H1 (cell line): ENCODE measurements at regions of chr4 and their contacts with region 1.

Region 1: DNA sequence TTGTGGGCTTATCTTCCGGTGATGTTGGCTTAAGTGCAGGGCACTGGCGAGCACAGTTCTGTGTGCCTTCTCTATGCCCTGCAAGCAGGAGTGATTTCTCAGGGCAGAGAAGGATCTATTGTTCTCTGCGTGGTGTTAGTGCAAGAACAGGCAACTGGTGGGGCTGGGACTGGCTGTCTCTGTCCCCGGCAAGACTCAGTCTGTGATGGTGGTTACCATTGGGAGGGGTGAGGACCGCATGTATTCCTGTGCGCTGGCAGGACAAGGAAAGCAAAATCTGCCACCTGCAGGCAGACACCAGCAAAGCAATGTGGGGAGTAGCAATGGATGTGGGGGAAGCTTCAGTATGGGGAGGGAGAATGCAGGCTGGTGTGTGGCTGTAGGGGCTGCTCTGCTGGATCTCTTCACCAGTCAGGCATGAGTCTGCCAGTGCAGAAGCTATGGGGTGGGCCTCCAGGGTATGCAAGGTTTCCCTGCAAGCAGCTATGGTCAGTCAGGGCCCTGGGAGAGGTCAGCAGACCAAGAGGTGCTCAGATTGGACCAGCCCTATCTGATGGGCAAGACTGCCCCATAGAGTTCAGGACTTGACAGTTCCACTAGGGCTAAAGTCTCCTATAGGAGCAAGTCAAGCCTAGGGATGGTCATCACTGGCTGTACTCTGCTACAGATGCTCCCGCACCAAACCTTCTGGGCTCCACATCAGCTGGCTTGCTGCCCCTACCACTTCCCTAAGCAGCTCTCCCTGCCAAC is 16.8 kb downstream of the PF4 start:
- DNase-seq: peak in 1 of 2 experiments; percentile 79
- H3K4me3 ChIP-seq: no peak overlapping the region
- H3K27ac ChIP-seq: no peak overlapping the region
- H3K4me1 ChIP-seq: 0 out of 7 replicates have a peak, but pooled peaks cover 0 to 1% (median 0%) of the 10 kb centered on the region in 4 experiments
- H3K27me3 ChIP-seq: no peaks in the 10 kb centered on the region; a peak in 1 of 7 replicates
- CTCF ChIP-seq: peak; percentile 70 to 92 (median 92)
- EP300 ChIP-seq: no peak
- POLR2A ChIP-seq: no peak
- RAD21 ChIP-seq: peak; percentile 78 to 86

Region 2: GRCh38 chr4:73729534-73730165 is 235.4 kb before region 1 on chr4:
- CTCF ChIA-PET with region 1: interaction called, 20 read pairs
- POLR2A ChIA-PET with region 1: no interaction called
- DNase-seq: no peak
- H3K4me3 ChIP-seq: no peak overlapping the region
- H3K27ac ChIP-seq: no peak overlapping the region
- H3K4me1 ChIP-seq: peaks cover 0 to 2% (median 0%) of the 10 kb centered on the region in 4 experiments; a peak in 1 of 7 replicates
- H3K27me3 ChIP-seq: no peaks in the 10 kb centered on the region
- CTCF ChIP-seq: peak; percentile 62 to 86 (median 75)
- EP300 ChIP-seq: no peak
- POLR2A ChIP-seq: no peak
- RAD21 ChIP-seq: peak; percentile 65 to 80

Region 3: DNA sequence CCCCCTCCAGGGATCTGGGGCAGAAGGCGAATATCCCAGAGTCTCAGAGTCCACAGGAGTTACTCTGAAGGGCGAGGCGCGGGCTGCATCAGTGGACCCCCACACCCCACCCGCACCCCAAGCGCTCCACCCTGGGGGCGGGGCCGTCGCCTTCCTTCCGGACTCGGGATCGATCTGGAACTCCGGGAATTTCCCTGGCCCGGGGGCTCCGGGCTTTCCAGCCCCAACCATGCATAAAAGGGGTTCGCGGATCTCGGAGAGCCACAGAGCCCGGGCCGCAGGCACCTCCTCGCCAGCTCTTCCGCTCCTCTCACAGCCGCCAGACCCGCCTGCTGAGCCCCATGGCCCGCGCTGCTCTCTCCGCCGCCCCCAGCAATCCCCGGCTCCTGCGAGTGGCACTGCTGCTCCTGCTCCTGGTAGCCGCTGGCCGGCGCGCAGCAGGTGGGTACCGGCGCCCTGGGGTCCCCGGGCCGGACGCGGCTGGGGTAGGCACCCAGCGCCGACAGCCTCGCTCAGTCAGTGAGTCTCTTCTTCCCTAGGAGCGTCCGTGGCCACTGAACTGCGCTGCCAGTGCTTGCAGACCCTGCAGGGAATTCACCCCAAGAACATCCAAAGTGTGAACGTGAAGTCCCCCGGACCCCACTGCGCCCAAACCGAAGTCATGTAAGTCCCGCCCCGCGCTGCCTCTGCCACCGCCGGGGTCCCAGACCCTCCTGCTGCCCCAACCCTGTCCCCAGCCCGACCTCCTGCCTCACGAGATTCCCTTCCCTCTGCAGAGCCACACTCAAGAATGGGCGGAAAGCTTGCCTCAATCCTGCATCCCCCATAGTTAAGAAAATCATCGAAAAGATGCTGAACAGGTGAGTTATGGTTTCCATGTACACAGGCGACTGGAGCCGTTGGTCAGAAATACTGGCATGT is 95.6 kb before region 1 on chr4 and contains the start of gene CXCL1:
- CTCF ChIA-PET with region 1: interaction called, 11 read pairs
- POLR2A ChIA-PET with region 1: no interaction called
- DNase-seq: peak in 1 of 2 experiments; percentile 70
- H3K4me3 ChIP-seq: peak within 1 kb of the TSS; percentile 30 to 76 (median 57)
- H3K27ac ChIP-seq: no peak within 1 kb of the TSS
- H3K4me1 ChIP-seq: peaks cover 0 to 4% (median 2%) of the 10 kb centered on the region in 4 experiments; a peak in 3 of 7 replicates
- H3K27me3 ChIP-seq: peaks cover 0 to 22% (median 11%) of the 10 kb centered on the region in 4 experiments; a peak in 6 of 7 replicates
- CTCF ChIP-seq: no peak
- EP300 ChIP-seq: no peak
- POLR2A ChIP-seq: no peak
- RAD21 ChIP-seq: no peak
- total RNA-seq, gene CXCL1: 0.69 and 0.80 TPM in 2 replicates

Region 4: GRCh38 chr4:73978886-73979285 is 13.8 kb after region 1 on chr4:
- CTCF ChIA-PET with region 1: interaction called, 37 read pairs
- POLR2A ChIA-PET with region 1: no interaction called
- DNase-seq: no peak
- H3K4me3 ChIP-seq: no peak overlapping the region
- H3K27ac ChIP-seq: no peak overlapping the region
- H3K4me1 ChIP-seq: peaks cover 0 to 18% (median 4%) of the 10 kb centered on the region in 4 experiments; a peak in 3 of 7 replicates
- H3K27me3 ChIP-seq: no peaks in the 10 kb centered on the region
- CTCF ChIP-seq: no peak
- EP300 ChIP-seq: no peak
- POLR2A ChIP-seq: no peak
- RAD21 ChIP-seq: no peak

Region 5: DNA sequence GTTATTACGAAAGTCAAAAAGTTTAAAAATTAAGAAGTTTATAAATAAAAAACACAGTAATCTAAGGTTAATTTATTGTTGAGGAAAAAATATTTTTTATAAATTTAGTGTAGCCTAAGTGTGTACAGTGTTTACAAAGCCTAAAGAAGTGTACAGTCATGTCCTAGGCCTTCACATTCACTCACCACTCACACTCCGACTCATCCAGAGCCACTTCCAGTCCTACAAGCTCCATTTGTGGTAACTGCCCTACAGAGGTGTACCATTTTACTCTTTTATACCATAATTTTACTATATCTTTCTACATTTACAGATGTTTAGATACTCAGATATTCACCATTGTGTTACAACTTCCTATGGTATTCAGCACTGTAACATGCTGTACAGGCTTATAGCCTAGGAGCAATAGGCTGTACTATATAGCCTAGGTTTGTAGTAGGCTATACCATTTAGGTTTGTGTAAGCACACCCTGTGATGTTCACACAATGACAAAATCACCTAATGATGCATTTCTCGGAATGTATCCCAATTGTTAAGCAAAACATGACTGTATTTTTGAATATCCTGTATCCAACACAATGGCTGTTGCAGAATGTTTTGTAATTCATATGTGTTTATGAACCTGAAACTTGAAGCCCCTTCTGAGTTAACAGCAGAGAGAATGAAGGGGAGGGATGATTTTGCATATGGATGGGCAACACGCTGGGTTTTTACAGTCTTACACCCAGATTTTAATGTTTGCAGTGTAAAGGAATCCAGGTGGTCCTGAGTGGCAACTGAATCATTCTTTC is 19.9 kb after region 1 on chr4:
- CTCF ChIA-PET with region 1: interaction called, 37 read pairs
- POLR2A ChIA-PET with region 1: no interaction called
- DNase-seq: peak in 1 of 2 experiments; percentile 78
- H3K4me3 ChIP-seq: no peak overlapping the region
- H3K27ac ChIP-seq: peak overlapping the region; percentile 62; the same call in 1 of the 2 replicates
- H3K4me1 ChIP-seq: peaks cover 0 to 19% (median 7%) of the 10 kb centered on the region in 4 experiments; a peak in 4 of 7 replicates
- H3K27me3 ChIP-seq: no peaks in the 10 kb centered on the region
- CTCF ChIP-seq: no peak
- EP300 ChIP-seq: peak in 1 of 2 experiments; percentile 95; a peak in 1 of 3 replicates
- POLR2A ChIP-seq: no peak
- RAD21 ChIP-seq: no peak

Region 6: GRCh38 chr4:74038161-74039064 is 73.4 kb after region 1 on chr4 and contains the start of gene CXCL3:
- CTCF ChIA-PET with region 1: interaction called, 12 read pairs
- POLR2A ChIA-PET with region 1: interaction called, 4 read pairs
- DNase-seq: peak in 1 of 2 experiments; percentile 88
- H3K4me3 ChIP-seq: peak within 1 kb of the TSS; percentile 61 to 92 (median 73)
- H3K27ac ChIP-seq: 0 out of 2 replicates have a peak within 1 kb of the TSS, but pooled peaks have one; percentile 47
- H3K4me1 ChIP-seq: peaks cover 1 to 14% (median 4%) of the 10 kb centered on the region in 4 experiments; a peak in 4 of 7 replicates
- H3K27me3 ChIP-seq: no peaks in the 10 kb centered on the region
- CTCF ChIP-seq: peak in 2 of 3 experiments; percentile 1 to 26; a peak in 3 of 4 replicates
- EP300 ChIP-seq: no peak
- POLR2A ChIP-seq: peak in 1 of 2 experiments; percentile 64; a peak in 2 of 3 replicates
- RAD21 ChIP-seq: peak in 1 of 2 experiments; percentile 28; a peak in 1 of 4 replicates
- total RNA-seq, gene CXCL3: 5.2 TPM in 2 replicates